Activated naive CD4-positive, alpha-beta T cell treated with anti-CD3 and anti-CD28 coated beads for 36 hours (primary cell): ENCODE measurements at regions of chr1 and their contacts with region 1.

Region 1: DNA sequence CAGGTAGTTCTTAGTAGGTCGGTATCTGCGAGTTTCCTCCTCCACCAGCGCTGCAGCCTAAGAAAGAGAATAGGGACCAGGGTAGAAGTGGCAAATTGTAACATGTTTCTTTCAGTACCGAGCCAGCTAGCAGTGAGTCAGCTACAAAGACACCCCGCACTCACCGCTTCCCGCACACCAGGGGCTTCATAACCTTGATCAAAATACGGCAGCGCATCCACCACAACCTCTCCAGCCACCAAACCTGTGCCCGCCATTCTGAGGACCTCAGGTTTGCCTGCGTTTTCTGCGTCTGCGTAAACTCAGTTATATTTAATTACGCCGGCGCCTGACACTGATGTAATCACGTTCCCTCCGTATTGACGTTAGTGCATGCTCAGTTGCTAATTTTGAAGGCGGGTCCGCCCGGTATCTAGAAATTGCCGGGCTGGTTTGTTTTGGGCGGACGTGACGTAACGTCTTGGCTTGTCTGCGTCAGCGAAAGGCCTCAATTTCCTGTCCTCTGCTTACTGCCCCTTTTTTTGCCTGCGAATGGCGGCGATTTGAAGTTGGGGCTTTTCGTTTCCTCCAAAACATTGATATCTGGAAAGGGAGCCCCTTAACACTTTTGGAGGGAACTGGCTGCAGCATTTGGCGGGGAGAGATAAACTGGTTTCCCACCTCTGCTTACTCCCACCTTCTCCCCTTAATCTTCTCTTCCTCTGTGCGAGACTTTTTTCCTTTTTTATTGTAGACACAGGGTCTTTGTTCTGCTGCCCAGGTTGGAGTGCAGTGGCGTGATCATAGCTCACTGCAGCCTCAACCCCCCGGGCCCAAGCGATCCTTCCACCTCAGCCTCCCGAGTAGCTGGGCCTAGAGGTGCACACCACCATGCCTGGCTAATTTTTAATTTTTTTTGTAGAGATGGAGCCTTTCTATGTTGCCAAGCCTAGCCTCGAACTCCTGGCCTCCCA is at the start of gene BCAS2:
- DNase-seq: peak; percentile 99
- H3K4me3 Mint-ChIP-seq: peak within 1 kb of the TSS; percentile 99
- H3K27ac Mint-ChIP-seq: peak within 1 kb of the TSS; percentile 96
- H3K4me1 Mint-ChIP-seq: peaks cover 32% of the 10 kb centered on the region
- H3K27me3 Mint-ChIP-seq: no peaks in the 10 kb centered on the region
- total RNA-seq, gene BCAS2: 46.5 to 48.0 TPM

Region 2: DNA sequence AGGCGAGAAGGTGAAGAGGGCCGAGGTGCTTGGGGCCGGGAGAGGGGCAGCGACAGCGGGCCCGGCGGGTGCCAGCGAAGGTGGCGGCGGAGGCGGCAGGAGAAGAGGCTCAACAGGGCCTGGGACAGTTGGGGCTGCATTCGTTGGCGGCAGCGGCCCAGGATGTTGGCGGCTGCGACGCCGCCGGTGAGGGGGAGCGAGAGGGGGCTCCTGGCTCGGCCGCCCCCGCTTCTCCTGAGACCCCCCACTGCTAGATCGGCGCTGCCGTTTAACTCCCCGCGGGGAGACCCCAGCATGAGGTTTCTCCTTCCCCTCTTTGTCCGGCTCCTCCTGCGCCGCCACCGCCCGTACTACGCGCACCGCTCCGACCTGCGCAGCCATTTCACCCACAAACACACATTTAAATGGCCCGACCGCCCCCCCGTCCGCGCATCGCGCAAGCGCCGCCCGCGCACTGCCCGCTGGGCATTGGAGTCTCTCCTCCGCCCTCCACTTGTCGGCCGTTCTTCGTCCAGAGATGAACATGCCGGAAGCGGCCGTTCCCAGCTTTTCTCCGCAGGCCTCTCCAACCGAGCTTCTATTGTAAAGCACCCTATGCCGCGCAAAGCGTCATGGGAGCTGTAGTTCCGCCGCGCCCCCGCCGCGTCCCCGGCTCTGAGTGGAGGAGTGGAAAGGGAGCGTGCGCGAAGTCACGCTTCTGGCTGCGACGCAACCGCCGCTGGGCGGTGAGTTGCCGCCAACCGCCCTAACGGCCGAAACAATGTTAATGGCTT is 769.5 kb before region 1 on chr1 and contains the start of gene RSBN1:
- CTCF ChIA-PET with region 1: no interaction called
- intact Hi-C with region 1: loop called (anchors 1 kb)
- DNase-seq: peak; percentile 99
- H3K4me3 Mint-ChIP-seq: peak within 1 kb of the TSS; percentile 98
- H3K27ac Mint-ChIP-seq: peak within 1 kb of the TSS; percentile 94
- H3K4me1 Mint-ChIP-seq: peaks cover 31% of the 10 kb centered on the region
- H3K27me3 Mint-ChIP-seq: no peaks in the 10 kb centered on the region
- total RNA-seq, gene RSBN1: 13.6 to 14.3 TPM

Region 3: DNA sequence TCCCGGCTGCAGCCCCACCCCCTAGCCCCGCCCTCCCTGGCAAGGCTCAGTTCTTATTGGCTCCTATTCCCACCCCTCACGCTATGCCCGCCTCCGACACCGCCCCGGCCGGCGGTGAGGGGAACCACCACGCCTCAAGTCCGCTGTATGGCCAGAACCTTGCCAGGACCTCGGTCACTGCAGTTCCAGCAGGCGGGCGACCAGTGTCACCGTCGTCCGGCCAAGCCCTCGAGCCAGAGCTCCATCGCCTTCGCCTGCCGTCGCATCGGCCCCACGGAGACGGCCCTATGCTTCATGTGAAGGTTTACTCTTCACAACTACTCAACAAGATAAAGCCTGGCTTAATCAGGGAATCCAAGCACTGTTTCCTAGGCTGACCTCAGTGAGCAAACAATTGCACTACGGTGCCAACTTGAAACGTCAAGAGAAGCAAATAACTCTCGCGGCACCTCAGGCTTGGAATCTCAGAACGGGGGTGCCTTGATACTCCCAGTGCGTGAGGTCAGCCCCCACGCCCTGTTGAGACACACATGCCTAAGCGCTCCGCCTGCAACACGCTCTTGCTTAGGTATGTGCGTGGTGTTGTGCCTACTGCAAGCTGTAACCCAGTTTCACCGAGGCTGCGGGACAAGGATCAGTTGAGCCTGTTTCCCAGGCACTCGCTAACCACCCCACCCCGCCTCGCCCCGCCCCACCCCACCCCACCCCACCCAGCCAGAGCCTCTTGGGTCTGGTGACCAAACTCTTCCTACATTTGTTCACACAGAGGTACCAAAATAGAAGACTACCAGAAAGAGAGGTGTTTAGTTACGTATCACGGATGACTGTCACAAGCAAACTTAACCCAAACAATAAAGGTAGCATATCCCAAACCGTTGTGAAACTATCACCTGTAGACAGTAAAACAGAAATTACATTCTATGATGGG is 88.7 kb after region 1 on chr1:
- CTCF ChIA-PET with region 1: no interaction called
- intact Hi-C with region 1: loop called (anchors 1 kb)
- DNase-seq: peak; percentile 87
- H3K4me3 Mint-ChIP-seq: peak overlapping the region; percentile 87
- H3K27ac Mint-ChIP-seq: no peak overlapping the region
- H3K4me1 Mint-ChIP-seq: peaks cover 4% of the 10 kb centered on the region
- H3K27me3 Mint-ChIP-seq: peaks cover 1% of the 10 kb centered on the region

Region 4: DNA sequence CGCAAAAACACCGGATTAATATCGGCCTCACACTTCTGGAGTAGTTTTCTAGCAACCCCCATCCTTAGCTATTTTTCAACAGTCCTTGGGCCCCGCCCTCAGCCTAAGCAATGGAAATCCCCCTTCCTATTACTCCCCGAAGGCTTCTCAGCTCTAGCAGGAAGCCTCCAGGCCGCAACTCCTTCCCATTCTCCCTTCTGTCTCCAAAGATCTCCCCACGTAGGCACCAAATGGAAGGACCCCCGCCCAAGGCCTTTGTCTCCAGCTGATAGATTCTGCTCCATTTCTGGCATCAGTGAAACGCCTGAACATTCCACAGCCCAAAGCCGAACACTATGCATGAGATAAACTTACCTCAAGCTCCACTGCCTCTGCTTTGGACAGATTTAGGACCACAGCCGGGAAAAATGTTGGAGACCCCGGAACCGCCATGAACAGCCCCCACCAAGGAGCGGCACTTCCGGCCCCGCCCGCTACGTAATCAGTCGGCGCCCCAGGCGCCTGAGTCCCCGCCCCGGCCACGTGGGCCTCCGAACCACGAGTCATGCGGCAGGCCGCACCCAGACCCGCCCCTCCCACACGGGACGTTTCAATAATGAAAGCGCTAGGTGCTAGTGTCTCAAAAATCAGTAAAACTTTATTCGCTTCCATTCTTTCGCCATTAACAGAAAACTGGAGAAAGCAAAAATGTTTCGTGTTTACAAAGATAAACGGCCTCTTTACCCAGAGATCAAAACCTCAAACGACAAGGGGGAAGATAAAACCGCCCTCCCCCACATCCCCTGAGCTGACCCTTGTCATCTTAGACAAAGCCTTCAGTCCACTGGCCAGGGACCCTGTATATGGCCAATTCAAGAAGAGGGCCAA is 134.9 kb after region 1 on chr1 and contains the start of gene NRAS:
- CTCF ChIA-PET with region 1: no interaction called
- intact Hi-C with region 1: loop called (anchors 1 kb)
- DNase-seq: peak; percentile 96
- H3K4me3 Mint-ChIP-seq: peak within 1 kb of the TSS; percentile 98
- H3K27ac Mint-ChIP-seq: peak within 1 kb of the TSS; percentile 99
- H3K4me1 Mint-ChIP-seq: peaks cover 27% of the 10 kb centered on the region
- H3K27me3 Mint-ChIP-seq: no peaks in the 10 kb centered on the region
- total RNA-seq, gene NRAS: 42.1 to 43.9 TPM

Region 5: GRCh38 chr1:114780344-114781226 is 199.0 kb after region 1 on chr1 and contains the start of gene SIKE1:
- CTCF ChIA-PET with region 1: no interaction called
- intact Hi-C with region 1: loop called (anchors 1 kb)
- DNase-seq: peak; percentile 97
- H3K4me3 Mint-ChIP-seq: peak within 1 kb of the TSS; percentile 100
- H3K27ac Mint-ChIP-seq: peak within 1 kb of the TSS; percentile 97
- H3K4me1 Mint-ChIP-seq: peaks cover 24% of the 10 kb centered on the region
- H3K27me3 Mint-ChIP-seq: no peaks in the 10 kb centered on the region
- total RNA-seq, gene SIKE1: 60.2 to 60.6 TPM

Region 6: DNA sequence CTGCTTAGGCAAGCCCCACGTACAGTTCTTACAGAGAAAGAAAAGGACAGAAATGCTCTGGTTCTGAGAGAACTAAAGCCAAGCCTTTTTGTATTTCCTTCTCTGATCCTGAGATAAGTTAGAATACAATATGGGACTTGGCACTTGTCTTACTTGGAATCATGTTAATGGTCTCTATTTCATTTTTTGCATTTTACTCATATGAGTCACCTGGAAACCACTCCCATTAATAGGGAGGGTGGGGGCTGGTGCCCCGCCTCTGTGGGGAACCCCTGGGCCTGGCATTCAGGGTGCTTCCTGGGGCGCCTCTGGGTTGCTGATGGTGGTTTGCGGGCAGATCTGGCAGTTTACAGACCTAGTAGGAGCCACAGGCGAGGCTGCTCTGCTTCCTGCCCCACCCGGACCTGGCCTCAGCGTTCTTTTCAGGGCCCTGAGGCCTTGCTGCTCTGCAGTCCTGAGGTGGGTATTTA is 481.0 kb after region 1 on chr1:
- CTCF ChIA-PET with region 1: no interaction called
- intact Hi-C with region 1: loop called (anchors 5 kb)
- DNase-seq: peak; percentile 96
- H3K4me3 Mint-ChIP-seq: no peak overlapping the region
- H3K27ac Mint-ChIP-seq: peak overlapping the region; percentile 74
- H3K4me1 Mint-ChIP-seq: peaks cover 41% of the 10 kb centered on the region
- H3K27me3 Mint-ChIP-seq: no peaks in the 10 kb centered on the region